Prostate gland (tissue), 2 donors: ENCODE measurements at regions of chr3 and their contacts with region 1.

Region 1: DNA sequence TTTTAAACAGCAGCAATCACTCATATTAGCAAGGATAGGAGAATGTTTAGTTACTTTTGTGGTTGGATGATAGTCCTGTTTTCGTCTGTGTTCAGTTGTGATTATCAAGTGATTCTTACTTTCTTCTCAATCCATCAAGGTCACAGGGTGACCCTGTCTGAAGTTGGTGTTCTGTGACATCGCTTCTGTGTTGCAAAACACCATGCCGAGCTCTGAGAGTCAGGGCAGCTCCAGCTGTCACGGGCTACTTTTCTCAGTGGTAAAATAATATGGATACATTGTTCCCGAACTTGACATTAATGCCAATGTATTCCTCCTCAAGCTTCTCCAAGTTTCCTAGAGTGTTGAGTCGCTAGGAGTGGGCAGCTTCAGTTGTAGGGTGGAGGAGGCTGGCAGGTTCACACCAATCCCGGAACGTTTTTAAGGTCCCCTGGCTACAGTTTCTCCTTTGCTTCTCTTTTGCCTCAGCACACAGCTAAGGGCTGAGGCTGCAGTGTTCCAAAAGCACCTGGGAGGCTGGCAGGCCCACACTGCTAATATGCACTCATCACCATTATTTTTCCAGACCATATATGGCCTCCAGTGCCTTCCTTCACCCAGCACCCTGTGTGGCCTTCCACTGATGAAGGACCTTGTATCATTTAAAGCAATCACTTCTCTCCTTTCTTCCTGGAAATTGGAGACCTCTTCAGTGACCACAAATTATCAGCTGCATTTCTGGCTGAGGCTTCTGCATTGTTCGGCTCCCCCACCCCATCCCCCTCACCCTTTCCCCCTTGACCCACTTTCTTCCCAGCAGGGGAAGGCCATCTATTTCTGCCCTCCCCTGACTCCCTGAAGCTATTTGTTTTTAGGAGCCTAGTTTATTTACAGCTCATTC is 25.8 kb downstream of the COLQ start:
- DNase-seq: no peak
- H3K4me3 ChIP-seq: no peak overlapping the region
- H3K27ac ChIP-seq: peak overlapping the region; percentile 11 to 32
- H3K4me1 ChIP-seq: no peaks in the 10 kb centered on the region
- H3K27me3 ChIP-seq: no peaks in the 10 kb centered on the region
- CTCF ChIP-seq: no peak
- POLR2A ChIP-seq: no peak

Region 2: DNA sequence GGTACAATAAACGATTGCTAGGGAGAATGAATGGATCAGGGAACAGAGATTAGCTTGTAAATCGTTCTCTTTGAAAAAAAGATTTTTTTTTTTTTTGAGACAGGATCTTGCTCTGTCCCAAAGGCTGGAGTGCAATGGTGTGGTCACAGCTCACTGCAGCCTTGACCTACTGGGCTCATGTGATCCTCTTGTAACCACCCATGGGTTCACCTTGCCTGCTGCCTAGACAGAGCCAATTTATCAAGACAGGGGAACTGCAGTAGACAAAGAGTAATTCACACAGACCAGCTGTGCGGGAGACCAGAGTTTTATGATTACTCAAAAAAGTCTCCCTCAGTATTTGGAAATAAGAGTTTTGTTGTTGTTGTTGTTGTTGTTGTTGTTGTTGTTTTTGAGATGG is 108.0 kb before region 1 on chr3:
- intact Hi-C with region 1: no loop called
- DNase-seq: no peak
- H3K4me3 ChIP-seq: no peak overlapping the region
- H3K27ac ChIP-seq: no peak overlapping the region
- H3K4me1 ChIP-seq: no peaks in the 10 kb centered on the region
- H3K27me3 ChIP-seq: no peaks in the 10 kb centered on the region
- CTCF ChIP-seq: no peak
- POLR2A ChIP-seq: no peak

Region 3: DNA sequence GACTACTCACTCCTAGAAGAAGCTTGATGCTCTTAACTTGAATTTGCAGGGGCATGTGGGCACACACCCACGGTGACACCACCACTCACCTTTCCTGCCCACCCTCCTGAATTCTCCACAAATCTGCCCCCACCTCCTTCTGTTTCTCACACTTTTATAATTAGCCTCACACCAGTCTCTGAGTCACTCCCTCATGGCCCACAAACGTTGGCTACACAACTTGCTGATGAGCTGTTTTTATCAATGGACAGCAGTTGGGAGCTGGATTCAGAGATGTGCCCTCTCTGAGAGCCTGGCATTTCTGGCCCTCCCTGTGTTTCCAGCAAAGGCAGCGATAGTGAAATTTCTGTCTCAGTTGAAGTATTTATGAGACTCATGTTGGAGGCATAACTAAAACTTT is 24.5 kb after region 1 on chr3:
- intact Hi-C with region 1: loop called (anchors 2 kb)
- DNase-seq: no peak
- H3K4me3 ChIP-seq: no peak overlapping the region
- H3K27ac ChIP-seq: no peak overlapping the region
- H3K4me1 ChIP-seq: no peaks in the 10 kb centered on the region
- H3K27me3 ChIP-seq: no peaks in the 10 kb centered on the region
- CTCF ChIP-seq: no peak
- POLR2A ChIP-seq: no peak

Region 4: GRCh38 chr3:15682561-15683185 is 187.0 kb after region 1 on chr3:
- intact Hi-C with region 1: no loop called
- DNase-seq: no peak
- H3K4me3 ChIP-seq: no peak overlapping the region
- H3K27ac ChIP-seq: no peak overlapping the region
- H3K4me1 ChIP-seq: peaks cover 10% of the 10 kb centered on the region
- H3K27me3 ChIP-seq: no peaks in the 10 kb centered on the region
- CTCF ChIP-seq: no peak
- POLR2A ChIP-seq: no peak